GM12878 (cell line): ENCODE measurements at regions of chr11 and their contacts with region 1.

Region 1: GRCh38 chr11:35391922-35392813 is 27.2 kb downstream of the SLC1A2 start:
- DNase-seq: peak; percentile 45
- ATAC-seq: peak; percentile 87
- H3K4me3 ChIP-seq: peak overlapping the region; percentile 21; the same call in 1 of the 2 replicates
- H3K27ac ChIP-seq: no peak overlapping the region
- H3K4me1 ChIP-seq: peaks cover 25% of the 10 kb centered on the region
- H3K27me3 ChIP-seq: no peaks in the 10 kb centered on the region; a peak in 1 of 4 replicates
- CTCF ChIP-seq: peak; percentile 84 to 93 (median 93); a peak in 5 of 6 replicates
- EP300 ChIP-seq: no peak
- POLR2A ChIP-seq: no peak
- RAD21 ChIP-seq: peak; percentile 99

Region 2: GRCh38 chr11:34840736-34841386 is 551.3 kb before region 1 on chr11:
- CTCF ChIA-PET with region 1: interaction called, 4 read pairs
- POLR2A ChIA-PET with region 1: no interaction called
- RAD21 ChIA-PET with region 1: interaction called, 3 read pairs
- SMC1A ChIA-PET with region 1: no interaction called
- in situ Hi-C with region 1: no loop called
- intact Hi-C with region 1: loop called (anchors 5 kb)
- DNase-seq: no peak
- ATAC-seq: peak; percentile 99
- H3K4me3 ChIP-seq: no peak overlapping the region
- H3K27ac ChIP-seq: no peak overlapping the region
- H3K4me1 ChIP-seq: no peaks in the 10 kb centered on the region
- H3K27me3 ChIP-seq: peaks cover 0 to 1% of the 10 kb centered on the region in 2 experiments; a peak in 2 of 4 replicates
- CTCF ChIP-seq: peak; percentile 57 to 80 (median 74)
- EP300 ChIP-seq: no peak
- POLR2A ChIP-seq: no peak
- RAD21 ChIP-seq: peak; percentile 51

Region 3: DNA sequence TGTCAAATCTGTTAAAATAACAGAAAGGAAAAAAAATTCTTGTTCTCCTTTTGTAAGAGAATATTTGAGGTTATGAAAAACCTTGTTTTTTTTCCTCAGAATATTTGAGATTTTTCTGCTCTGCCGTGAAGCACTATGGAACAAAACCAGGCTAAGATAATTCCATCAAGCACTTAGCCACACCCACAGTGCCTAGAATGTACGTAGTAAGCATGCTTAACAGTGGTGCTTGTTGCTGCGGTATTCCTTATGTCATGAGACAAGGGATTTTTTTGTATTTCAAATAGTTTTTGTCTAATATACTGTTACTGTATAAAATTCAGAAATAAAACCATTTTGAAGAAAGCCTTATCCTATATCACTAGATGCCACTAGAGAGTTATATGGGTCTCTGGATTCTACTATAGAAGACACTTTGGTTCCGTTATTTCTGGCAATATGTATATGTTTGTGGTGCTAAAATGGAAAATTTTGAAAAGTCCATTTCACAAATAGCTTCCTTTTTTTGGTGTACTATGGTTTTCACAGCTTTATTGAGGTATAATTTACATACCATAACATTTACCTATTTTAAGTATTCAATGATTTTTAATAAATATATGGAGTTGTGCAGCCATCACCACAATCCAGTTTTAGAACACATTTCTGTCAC is 452.0 kb before region 1 on chr11:
- CTCF ChIA-PET with region 1: interaction called, 26 read pairs
- POLR2A ChIA-PET with region 1: no interaction called
- RAD21 ChIA-PET with region 1: interaction called, 8 read pairs
- SMC1A ChIA-PET with region 1: interaction called, 18 read pairs
- in situ Hi-C with region 1: no loop called
- intact Hi-C with region 1: no loop called
- DNase-seq: no peak
- ATAC-seq: peak; percentile 61
- H3K4me3 ChIP-seq: no peak overlapping the region
- H3K27ac ChIP-seq: no peak overlapping the region
- H3K4me1 ChIP-seq: no peaks in the 10 kb centered on the region; the same call in 1 of the 2 replicates
- H3K27me3 ChIP-seq: no peaks in the 10 kb centered on the region
- CTCF ChIP-seq: peak in 2 of 3 experiments; percentile 8 to 27; a peak in 1 of 6 replicates
- EP300 ChIP-seq: no peak
- POLR2A ChIP-seq: no peak
- RAD21 ChIP-seq: peak; percentile 46

Region 4: DNA sequence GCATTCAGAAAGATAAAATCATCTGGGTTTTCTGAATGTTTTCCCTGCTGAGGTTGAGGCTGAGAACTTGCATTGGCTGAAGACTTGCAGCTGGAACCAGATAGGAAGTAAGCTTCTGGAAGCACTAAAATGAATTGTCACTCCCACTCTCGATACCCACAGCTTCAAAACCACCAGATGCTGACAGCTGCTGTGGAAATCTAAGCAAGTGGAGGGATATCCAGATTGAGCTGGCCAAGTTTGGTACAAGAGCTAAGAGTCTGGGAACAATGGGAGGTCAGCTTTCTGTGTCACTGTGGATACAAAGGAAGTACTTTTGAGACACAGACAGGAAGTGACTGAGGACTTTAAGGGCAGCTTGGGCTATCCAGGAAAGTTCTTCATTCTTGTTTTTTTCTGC is 304.5 kb before region 1 on chr11:
- CTCF ChIA-PET with region 1: no interaction called
- POLR2A ChIA-PET with region 1: no interaction called
- RAD21 ChIA-PET with region 1: no interaction called
- SMC1A ChIA-PET with region 1: no interaction called
- in situ Hi-C with region 1: no loop called
- intact Hi-C with region 1: loop called (anchors 5 kb)
- DNase-seq: no peak
- ATAC-seq: no peak
- H3K4me3 ChIP-seq: no peak overlapping the region
- H3K27ac ChIP-seq: peak overlapping the region; percentile 30; the same call in 1 of the 2 replicates
- H3K4me1 ChIP-seq: peaks cover 47% of the 10 kb centered on the region
- H3K27me3 ChIP-seq: no peaks in the 10 kb centered on the region
- CTCF ChIP-seq: no peak
- EP300 ChIP-seq: no peak
- POLR2A ChIP-seq: no peak
- RAD21 ChIP-seq: no peak

Region 5: GRCh38 chr11:35257281-35257680 is 134.9 kb before region 1 on chr11:
- CTCF ChIA-PET with region 1: interaction called, 8 read pairs
- POLR2A ChIA-PET with region 1: interaction called, 3 read pairs
- RAD21 ChIA-PET with region 1: interaction called, 6 read pairs
- SMC1A ChIA-PET with region 1: interaction called, 11 read pairs
- in situ Hi-C with region 1: no loop called
- intact Hi-C with region 1: no loop called
- DNase-seq: peak; percentile 55
- ATAC-seq: peak; percentile 100
- H3K4me3 ChIP-seq: 0 out of 2 replicates have a peak overlapping the region, but pooled peaks have one; percentile 39
- H3K27ac ChIP-seq: no peak overlapping the region
- H3K4me1 ChIP-seq: peaks cover 11% of the 10 kb centered on the region
- H3K27me3 ChIP-seq: no peaks in the 10 kb centered on the region
- CTCF ChIP-seq: no peak
- EP300 ChIP-seq: no peak
- POLR2A ChIP-seq: no peak
- RAD21 ChIP-seq: no peak

Region 6: GRCh38 chr11:35313066-35313759 is 79.0 kb before region 1 on chr11:
- CTCF ChIA-PET with region 1: interaction called, 6 read pairs
- POLR2A ChIA-PET with region 1: interaction called, 3 read pairs
- RAD21 ChIA-PET with region 1: interaction called, 14 read pairs
- SMC1A ChIA-PET with region 1: interaction called, 6 read pairs
- in situ Hi-C with region 1: no loop called
- intact Hi-C with region 1: loop called (anchors 2 kb)
- DNase-seq: peak; percentile 71
- ATAC-seq: peak; percentile 95
- H3K4me3 ChIP-seq: 0 out of 2 replicates have a peak overlapping the region, but pooled peaks have one; percentile 24
- H3K27ac ChIP-seq: peak overlapping the region; percentile 76
- H3K4me1 ChIP-seq: peaks cover 30% of the 10 kb centered on the region
- H3K27me3 ChIP-seq: no peaks in the 10 kb centered on the region
- CTCF ChIP-seq: no peak
- EP300 ChIP-seq: peak; percentile 85; a peak in 3 of 4 replicates
- POLR2A ChIP-seq: no peak
- RAD21 ChIP-seq: 0 out of 2 replicates have a peak, but pooled peaks have one; percentile 2

Region 7: DNA sequence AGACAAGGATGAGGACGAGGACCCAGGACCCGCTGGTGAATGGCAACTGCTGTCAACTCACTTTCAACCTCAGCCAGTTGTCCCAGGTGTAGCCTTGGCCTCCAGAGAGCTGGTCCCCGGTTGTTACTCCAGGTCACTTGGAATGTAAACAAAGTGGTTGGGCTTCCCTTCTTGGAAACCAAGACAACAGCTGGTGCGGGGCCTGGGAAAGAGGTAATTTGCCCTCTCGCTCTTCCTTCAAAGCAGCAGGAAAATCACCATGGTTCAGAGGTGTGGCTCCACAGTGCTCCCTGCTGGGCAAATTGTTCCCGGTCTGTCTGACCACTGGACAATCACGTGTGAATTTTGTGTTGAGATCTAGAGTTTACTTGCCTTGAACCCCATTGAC is 12.2 kb after region 1 on chr11:
- CTCF ChIA-PET with region 1: interaction called, 10 read pairs
- POLR2A ChIA-PET with region 1: no interaction called
- RAD21 ChIA-PET with region 1: interaction called, 3 read pairs
- SMC1A ChIA-PET with region 1: interaction called, 4 read pairs
- in situ Hi-C with region 1: no loop called
- intact Hi-C with region 1: no loop called
- DNase-seq: no peak
- ATAC-seq: peak; percentile 64
- H3K4me3 ChIP-seq: no peak overlapping the region
- H3K27ac ChIP-seq: no peak overlapping the region
- H3K4me1 ChIP-seq: no peaks in the 10 kb centered on the region
- H3K27me3 ChIP-seq: 0 out of 4 replicates have a peak, but pooled peaks cover 0 to 6% of the 10 kb centered on the region in 2 experiments
- CTCF ChIP-seq: peak; percentile 42 to 53 (median 52); a peak in 5 of 6 replicates
- EP300 ChIP-seq: no peak
- POLR2A ChIP-seq: no peak
- RAD21 ChIP-seq: peak; percentile 50